CD4-positive, alpha-beta T cell (primary cell): ENCODE measurements at regions of chr17 and their contacts with region 1.

Region 1: DNA sequence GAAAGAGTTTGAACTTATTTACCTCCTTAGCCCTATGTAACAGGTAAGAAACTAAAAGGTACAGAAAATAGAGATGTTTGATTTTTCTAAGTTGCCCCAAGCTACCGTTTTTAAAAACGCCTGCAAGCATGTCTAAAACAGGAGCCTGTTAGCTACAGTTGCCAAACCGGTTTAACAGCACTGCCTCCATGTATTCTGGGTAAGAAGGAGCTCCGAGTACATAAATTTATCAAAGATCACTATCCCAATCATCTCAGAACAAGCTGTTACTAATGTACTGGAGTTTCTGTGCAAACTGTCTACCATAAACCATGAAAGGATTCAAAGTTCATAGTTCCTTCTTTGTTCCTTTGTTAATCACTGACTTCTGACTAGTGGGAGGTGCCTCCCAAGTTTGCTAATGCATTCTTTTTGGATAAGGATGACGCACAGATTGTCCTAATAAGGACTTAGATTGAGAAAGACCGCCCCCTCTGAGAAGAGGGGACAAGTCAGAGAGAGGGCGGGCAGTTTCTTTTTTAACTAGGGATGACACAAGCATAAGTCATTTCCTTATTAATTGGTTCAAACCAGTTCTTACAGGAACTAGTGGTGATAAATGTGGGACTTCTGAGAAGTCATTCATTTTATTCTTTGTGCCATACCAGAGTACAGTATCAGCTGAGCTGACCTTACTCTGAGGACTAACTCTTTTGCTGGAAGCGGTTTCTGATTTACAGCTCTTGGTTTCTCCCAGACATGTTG is 55.3 kb downstream of the TUBD1 start:
- DNase-seq: peak in 10 of 14 experiments; percentile 34 to 98 (median 65)
- ATAC-seq: peak; percentile 89
- H3K4me3 ChIP-seq: peak overlapping the region; percentile 82
- H3K4me3 Mint-ChIP-seq: peak overlapping the region; percentile 94
- H3K27ac ChIP-seq: peak overlapping the region; percentile 77 to 92
- H3K27ac Mint-ChIP-seq: peak overlapping the region; percentile 86
- H3K4me1 ChIP-seq: peaks cover 13% of the 10 kb centered on the region
- H3K4me1 Mint-ChIP-seq: peaks cover 68% of the 10 kb centered on the region
- H3K27me3 ChIP-seq: no peaks in the 10 kb centered on the region
- H3K27me3 Mint-ChIP-seq: no peaks in the 10 kb centered on the region
- CTCF ChIP-seq: no peak

Region 2: GRCh38 chr17:59666235-59666634 is 171.2 kb before region 1 on chr17:
- CTCF ChIA-PET with region 1: no interaction called
- POLR2A ChIA-PET with region 1: no interaction called
- intact Hi-C with region 1: no loop called
- DNase-seq: no peak
- ATAC-seq: no peak
- H3K4me3 ChIP-seq: no peak overlapping the region
- H3K4me3 Mint-ChIP-seq: no peak overlapping the region
- H3K27ac ChIP-seq: no peak overlapping the region
- H3K27ac Mint-ChIP-seq: no peak overlapping the region
- H3K4me1 ChIP-seq: no peaks in the 10 kb centered on the region
- H3K4me1 Mint-ChIP-seq: peaks cover 8% of the 10 kb centered on the region
- H3K27me3 ChIP-seq: no peaks in the 10 kb centered on the region
- H3K27me3 Mint-ChIP-seq: no peaks in the 10 kb centered on the region
- CTCF ChIP-seq: no peak

Region 3: DNA sequence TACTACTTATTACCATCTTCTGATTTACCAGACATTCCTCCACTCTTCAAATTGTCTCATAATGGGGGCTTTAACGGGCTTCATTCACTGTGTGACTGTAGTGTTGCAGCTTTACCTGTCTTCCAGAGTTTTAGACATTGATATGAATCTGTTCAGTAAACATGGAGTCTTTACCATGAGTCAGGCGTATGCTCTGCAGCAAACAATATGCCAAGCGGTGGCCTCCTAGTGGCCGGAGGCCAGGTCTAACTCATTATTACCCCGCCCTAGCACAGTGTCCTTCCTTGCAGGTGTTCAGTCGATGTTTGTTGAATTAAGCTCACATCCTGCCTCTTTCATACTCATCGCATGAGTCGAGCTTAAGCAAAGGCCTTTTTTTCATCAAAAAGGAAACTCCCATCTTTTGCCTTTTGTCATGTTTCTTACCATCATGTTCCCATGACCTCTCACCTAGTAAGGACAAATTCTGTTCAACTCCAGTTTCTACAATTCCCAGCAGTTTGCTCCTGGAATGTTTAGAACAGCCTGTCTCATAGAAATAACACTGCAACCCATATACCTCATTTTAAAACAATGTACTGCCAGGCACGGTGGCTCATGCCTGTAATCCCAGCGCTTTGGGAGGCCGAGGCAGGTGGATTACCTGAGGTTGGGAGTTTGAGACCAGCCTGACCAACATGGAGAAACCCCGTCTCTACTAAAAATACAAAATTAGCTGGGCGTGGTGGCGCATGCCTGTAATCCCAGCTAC is 15.9 kb after region 1 on chr17:
- CTCF ChIA-PET with region 1: interaction called, 8 read pairs
- POLR2A ChIA-PET with region 1: interaction called, 36 read pairs
- intact Hi-C with region 1: no loop called
- DNase-seq: peak in 13 of 14 experiments; percentile 28 to 83 (median 60)
- ATAC-seq: peak; percentile 94
- H3K4me3 ChIP-seq: no peak overlapping the region
- H3K4me3 Mint-ChIP-seq: peak overlapping the region; percentile 14
- H3K27ac ChIP-seq: no peak overlapping the region
- H3K27ac Mint-ChIP-seq: peak overlapping the region; percentile 66
- H3K4me1 ChIP-seq: peaks cover 37% of the 10 kb centered on the region
- H3K4me1 Mint-ChIP-seq: peaks cover 29% of the 10 kb centered on the region
- H3K27me3 ChIP-seq: no peaks in the 10 kb centered on the region
- H3K27me3 Mint-ChIP-seq: no peaks in the 10 kb centered on the region
- CTCF ChIP-seq: no peak

Region 4: GRCh38 chr17:59859444-59860025 is 22.1 kb after region 1 on chr17:
- CTCF ChIA-PET with region 1: interaction called, 8 read pairs
- POLR2A ChIA-PET with region 1: interaction called, 10 read pairs
- intact Hi-C with region 1: no loop called
- DNase-seq: peak in 3 of 14 experiments; percentile 67 to 71 (median 71)
- ATAC-seq: peak; percentile 73
- H3K4me3 ChIP-seq: no peak overlapping the region
- H3K4me3 Mint-ChIP-seq: no peak overlapping the region
- H3K27ac ChIP-seq: no peak overlapping the region
- H3K27ac Mint-ChIP-seq: peak overlapping the region; percentile 64
- H3K4me1 ChIP-seq: no peaks in the 10 kb centered on the region
- H3K4me1 Mint-ChIP-seq: peaks cover 5% of the 10 kb centered on the region
- H3K27me3 ChIP-seq: no peaks in the 10 kb centered on the region
- H3K27me3 Mint-ChIP-seq: no peaks in the 10 kb centered on the region
- CTCF ChIP-seq: peak; percentile 60

Region 5: GRCh38 chr17:59876107-59876506 is 38.6 kb after region 1 on chr17:
- CTCF ChIA-PET with region 1: no interaction called
- POLR2A ChIA-PET with region 1: no interaction called
- intact Hi-C with region 1: no loop called
- DNase-seq: no peak
- ATAC-seq: no peak
- H3K4me3 ChIP-seq: no peak overlapping the region
- H3K4me3 Mint-ChIP-seq: no peak overlapping the region
- H3K27ac ChIP-seq: no peak overlapping the region
- H3K27ac Mint-ChIP-seq: no peak overlapping the region
- H3K4me1 ChIP-seq: no peaks in the 10 kb centered on the region
- H3K4me1 Mint-ChIP-seq: no peaks in the 10 kb centered on the region
- H3K27me3 ChIP-seq: no peaks in the 10 kb centered on the region
- H3K27me3 Mint-ChIP-seq: no peaks in the 10 kb centered on the region
- CTCF ChIP-seq: no peak

Region 6: GRCh38 chr17:59892924-59893676 is 55.6 kb after region 1 on chr17 and contains the starts of genes RPS6KB1 and TUBD1:
- CTCF ChIA-PET with region 1: interaction called, 3 read pairs
- POLR2A ChIA-PET with region 1: interaction called, 22 read pairs
- intact Hi-C with region 1: loop called in 1 of 2 experiments (anchors 5 kb)
- DNase-seq: peak; percentile 94 to 100 (median 97)
- ATAC-seq: peak; percentile 91
- H3K4me3 ChIP-seq: peak within 1 kb of the TSS; percentile 79
- H3K4me3 Mint-ChIP-seq: peak within 1 kb of the TSS; percentile 98
- H3K27ac ChIP-seq: peak within 1 kb of the TSS; percentile 88 to 94
- H3K27ac Mint-ChIP-seq: peak within 1 kb of the TSS; percentile 94
- H3K4me1 ChIP-seq: peaks cover 44% of the 10 kb centered on the region
- H3K4me1 Mint-ChIP-seq: peaks cover 65% of the 10 kb centered on the region
- H3K27me3 ChIP-seq: no peaks in the 10 kb centered on the region
- H3K27me3 Mint-ChIP-seq: no peaks in the 10 kb centered on the region
- CTCF ChIP-seq: no peak
- total RNA-seq, gene RPS6KB1: 129 to 135 TPM
- total RNA-seq, gene TUBD1: 7.3 to 9.4 TPM